ENCODE measurements at regions of chr15 and their contacts with region 1.

Region 1: DNA sequence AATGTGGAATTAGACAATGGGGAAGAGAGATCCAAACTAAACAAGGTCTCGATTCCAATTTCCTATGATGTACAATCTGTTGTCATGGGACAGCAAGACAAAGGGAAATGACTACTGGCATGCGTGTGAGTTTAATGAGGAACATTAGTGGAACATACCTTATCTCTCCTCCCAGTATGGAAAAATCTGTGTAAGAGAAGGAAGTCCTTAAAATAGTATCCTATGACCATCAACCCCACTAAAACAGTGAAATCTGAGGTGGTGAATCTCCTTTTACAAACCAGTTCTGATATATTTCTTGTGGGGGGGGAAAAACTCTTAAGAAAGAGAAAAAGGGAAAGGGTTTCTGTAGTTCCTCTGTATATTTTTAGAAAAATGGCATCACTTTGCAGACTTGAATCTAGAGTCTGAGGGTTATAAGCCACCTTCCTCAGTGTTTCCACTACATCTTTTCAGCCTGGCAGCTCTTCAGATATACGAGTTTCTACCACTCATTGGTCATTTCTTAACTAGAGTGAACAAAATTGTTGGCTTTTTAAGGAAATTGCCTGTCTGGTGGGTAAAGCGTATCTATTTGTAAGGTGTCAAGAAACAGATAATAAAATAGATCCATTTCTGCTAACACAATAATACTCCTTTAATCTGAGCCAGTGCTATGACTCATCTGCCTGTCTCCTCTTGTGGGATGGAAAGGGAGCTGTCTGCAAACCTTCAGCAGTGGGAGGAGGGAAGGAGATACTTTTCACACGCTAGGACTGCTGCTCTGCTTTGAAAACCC is 3.0 kb upstream of the TNFAIP8L3 start:
- DNase-seq: no peak
- H3K4me3 ChIP-seq: no peak overlapping the region
- CTCF ChIP-seq: no peak

Region 2: GRCh38 chr15:51108933-51109550 is 11.3 kb after region 1 on chr15:
- CTCF ChIA-PET with region 1: interaction called, 24 read pairs
- POLR2A ChIA-PET with region 1: interaction called, 5 read pairs
- DNase-seq: peak; percentile 67
- H3K4me3 ChIP-seq: no peak overlapping the region
- CTCF ChIP-seq: no peak

Region 3: GRCh38 chr15:51121118-51121517 is 23.4 kb after region 1 on chr15:
- CTCF ChIA-PET with region 1: no interaction called
- POLR2A ChIA-PET with region 1: no interaction called
- DNase-seq: peak; percentile 49
- H3K4me3 ChIP-seq: no peak overlapping the region
- CTCF ChIP-seq: peak; percentile 2

Region 4: DNA sequence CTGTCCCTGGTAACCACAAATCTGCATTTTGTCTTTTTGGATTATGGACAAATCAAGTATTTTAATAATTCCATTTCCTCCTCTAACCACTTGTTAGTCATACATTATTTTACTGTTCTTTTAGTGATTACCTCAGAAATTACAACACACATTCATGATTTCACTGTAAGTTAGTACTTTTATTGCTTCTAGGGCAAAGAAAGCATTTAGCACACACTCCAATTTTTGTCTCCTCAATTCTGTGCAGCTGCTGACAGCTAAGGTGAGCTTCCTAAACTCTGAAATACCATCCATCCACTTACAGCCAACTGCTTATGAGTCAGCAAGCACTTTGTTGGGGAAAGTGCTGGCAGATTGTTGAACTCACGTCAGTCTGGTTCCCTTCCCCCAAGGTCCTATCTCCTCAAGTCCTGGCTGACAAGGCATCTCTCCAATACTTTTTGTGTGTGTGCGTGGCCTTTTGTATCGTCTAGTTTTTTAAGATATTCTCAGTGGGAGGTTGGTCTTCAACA is 46.3 kb after region 1 on chr15:
- CTCF ChIA-PET with region 1: no interaction called
- POLR2A ChIA-PET with region 1: no interaction called
- DNase-seq: no peak
- H3K4me3 ChIP-seq: no peak overlapping the region
- CTCF ChIP-seq: no peak